MCF 10A (cell line): ENCODE measurements at regions of chr1 and their contacts with region 1.

Region 1: GRCh38 chr1:16366722-16367257 is at the start of gene SZRD1:
- DNase-seq: peak; percentile 99
- H3K4me3 Mint-ChIP-seq: peak within 1 kb of the TSS; percentile 74
- H3K27ac Mint-ChIP-seq: peak within 1 kb of the TSS; percentile 98
- H3K4me1 Mint-ChIP-seq: peaks cover 13% of the 10 kb centered on the region
- H3K27me3 Mint-ChIP-seq: no peaks in the 10 kb centered on the region
- CTCF ChIP-seq: no peak
- total RNA-seq, gene SZRD1: 108 and 114 TPM in 2 replicates

Region 2: GRCh38 chr1:16187748-16188401 is 178.9 kb before region 1 on chr1:
- CTCF ChIA-PET with region 1: interaction called, 3 read pairs
- POLR2A ChIA-PET with region 1: interaction called, 11 read pairs
- intact Hi-C with region 1: loop called (anchors 2 kb)
- DNase-seq: peak; percentile 82
- H3K4me3 Mint-ChIP-seq: no peak overlapping the region
- H3K27ac Mint-ChIP-seq: no peak overlapping the region
- H3K4me1 Mint-ChIP-seq: peaks cover 38% of the 10 kb centered on the region
- H3K27me3 Mint-ChIP-seq: no peaks in the 10 kb centered on the region
- CTCF ChIP-seq: peak; percentile 98

Region 3: DNA sequence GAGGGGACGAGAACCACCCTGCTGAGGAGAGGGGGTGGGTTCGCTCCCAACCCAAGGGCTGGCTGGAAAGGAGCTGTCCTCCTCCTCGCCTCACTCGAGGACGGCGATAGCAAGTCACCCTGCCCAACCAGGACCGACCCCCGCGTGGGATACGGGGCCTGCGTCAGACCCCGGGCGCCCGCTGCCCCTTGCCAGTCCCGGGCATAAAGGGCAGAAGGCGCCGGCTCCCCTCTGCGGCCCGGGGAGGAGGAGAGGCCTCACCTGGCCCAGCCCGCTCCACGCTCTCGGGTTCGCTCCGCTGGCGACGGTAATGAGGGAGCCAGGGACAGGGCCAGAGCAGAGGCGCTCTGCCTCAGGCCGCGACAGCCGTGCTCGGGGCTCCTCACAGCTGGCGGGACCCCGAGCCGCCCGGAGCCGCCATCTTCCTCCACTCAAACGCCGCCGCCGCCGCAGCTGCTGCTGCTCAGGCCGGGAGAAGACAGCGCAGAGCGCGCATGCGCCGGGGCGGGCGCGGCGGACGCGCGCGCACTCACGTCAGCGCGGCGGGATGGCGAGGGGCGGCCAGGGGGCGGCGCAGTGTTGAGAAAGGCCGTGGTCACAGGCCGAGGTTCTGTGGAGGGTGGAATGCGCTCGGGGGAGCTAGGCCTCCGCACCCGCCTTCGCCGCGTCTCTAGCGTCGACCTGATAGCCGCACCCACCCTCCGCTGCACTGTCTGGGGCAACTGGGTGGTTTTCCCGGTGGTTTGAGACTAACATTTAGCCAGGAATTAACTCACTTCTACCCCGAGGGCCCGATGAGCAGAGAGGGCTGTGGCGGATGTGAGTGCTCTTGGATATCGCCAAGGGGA is 14.6 kb before region 1 on chr1 and contains the start of gene FBXO42:
- CTCF ChIA-PET with region 1: interaction called, 24 read pairs
- POLR2A ChIA-PET with region 1: interaction called, 51 read pairs
- intact Hi-C with region 1: no loop called
- DNase-seq: peak; percentile 89
- H3K4me3 Mint-ChIP-seq: peak within 1 kb of the TSS; percentile 87
- H3K27ac Mint-ChIP-seq: peak within 1 kb of the TSS; percentile 84
- H3K4me1 Mint-ChIP-seq: peaks cover 16% of the 10 kb centered on the region
- H3K27me3 Mint-ChIP-seq: no peaks in the 10 kb centered on the region
- CTCF ChIP-seq: peak; percentile 29
- total RNA-seq, gene FBXO42: 21.9 and 24.9 TPM in 2 replicates

Region 4: GRCh38 chr1:16396591-16396990 is 29.8 kb after region 1 on chr1:
- CTCF ChIA-PET with region 1: no interaction called
- POLR2A ChIA-PET with region 1: interaction called, 17 read pairs
- intact Hi-C with region 1: loop called (anchors 1 kb)
- DNase-seq: peak; percentile 94
- H3K4me3 Mint-ChIP-seq: no peak overlapping the region
- H3K27ac Mint-ChIP-seq: peak overlapping the region; percentile 88
- H3K4me1 Mint-ChIP-seq: peaks cover 22% of the 10 kb centered on the region
- H3K27me3 Mint-ChIP-seq: no peaks in the 10 kb centered on the region
- CTCF ChIP-seq: no peak

Region 5: GRCh38 chr1:17033481-17033880 is 666.7 kb after region 1 on chr1:
- CTCF ChIA-PET with region 1: no interaction called
- POLR2A ChIA-PET with region 1: no interaction called
- intact Hi-C with region 1: no loop called
- DNase-seq: no peak
- H3K4me3 Mint-ChIP-seq: no peak overlapping the region
- H3K27ac Mint-ChIP-seq: no peak overlapping the region
- H3K4me1 Mint-ChIP-seq: peaks cover 5% of the 10 kb centered on the region
- H3K27me3 Mint-ChIP-seq: no peaks in the 10 kb centered on the region
- CTCF ChIP-seq: no peak